GM12878 (cell line): ENCODE measurements at regions of chr14 and their contacts with region 1.

Region 1: DNA sequence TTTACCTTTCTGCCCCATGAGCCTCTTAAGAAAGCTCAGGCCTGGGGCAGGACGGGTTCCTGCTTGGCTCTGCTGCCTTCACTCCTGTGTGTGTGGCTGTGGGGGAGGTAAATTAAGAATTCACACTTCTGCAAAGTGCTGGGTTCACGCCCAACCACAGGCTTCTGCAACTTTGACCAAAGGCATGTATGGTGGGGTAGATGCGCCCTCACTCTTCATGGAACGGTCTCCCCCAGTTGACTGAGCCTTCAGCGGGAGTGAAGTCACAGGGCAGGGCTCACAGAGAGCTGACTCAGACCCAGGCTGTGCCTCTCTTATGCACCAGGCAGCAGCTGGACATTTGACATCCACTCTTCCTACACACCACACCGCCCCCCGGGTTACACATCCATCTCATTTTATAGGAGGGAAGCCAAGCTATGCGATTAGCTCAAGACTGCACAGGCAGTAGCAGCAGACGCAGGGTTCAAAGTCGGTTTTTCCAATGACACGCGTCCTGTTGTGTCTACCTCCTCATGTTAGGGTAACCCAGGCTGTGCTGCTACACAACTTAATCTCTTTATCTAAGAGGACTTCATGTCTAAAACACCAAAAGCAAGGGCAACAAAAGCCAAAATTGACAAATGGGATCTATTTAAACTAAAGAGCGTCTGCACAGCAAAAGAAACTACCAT is 15.4 kb upstream of the BCL11B start:
- DNase-seq: peak; percentile 55
- ATAC-seq: peak; percentile 94
- H3K4me3 ChIP-seq: peak overlapping the region; percentile 55
- H3K27ac ChIP-seq: peak overlapping the region; percentile 78
- H3K4me1 ChIP-seq: peaks cover 31% of the 10 kb centered on the region
- H3K27me3 ChIP-seq: no peaks in the 10 kb centered on the region
- CTCF ChIP-seq: no peak
- EP300 ChIP-seq: no peak
- POLR2A ChIP-seq: no peak
- RAD21 ChIP-seq: no peak

Region 2: DNA sequence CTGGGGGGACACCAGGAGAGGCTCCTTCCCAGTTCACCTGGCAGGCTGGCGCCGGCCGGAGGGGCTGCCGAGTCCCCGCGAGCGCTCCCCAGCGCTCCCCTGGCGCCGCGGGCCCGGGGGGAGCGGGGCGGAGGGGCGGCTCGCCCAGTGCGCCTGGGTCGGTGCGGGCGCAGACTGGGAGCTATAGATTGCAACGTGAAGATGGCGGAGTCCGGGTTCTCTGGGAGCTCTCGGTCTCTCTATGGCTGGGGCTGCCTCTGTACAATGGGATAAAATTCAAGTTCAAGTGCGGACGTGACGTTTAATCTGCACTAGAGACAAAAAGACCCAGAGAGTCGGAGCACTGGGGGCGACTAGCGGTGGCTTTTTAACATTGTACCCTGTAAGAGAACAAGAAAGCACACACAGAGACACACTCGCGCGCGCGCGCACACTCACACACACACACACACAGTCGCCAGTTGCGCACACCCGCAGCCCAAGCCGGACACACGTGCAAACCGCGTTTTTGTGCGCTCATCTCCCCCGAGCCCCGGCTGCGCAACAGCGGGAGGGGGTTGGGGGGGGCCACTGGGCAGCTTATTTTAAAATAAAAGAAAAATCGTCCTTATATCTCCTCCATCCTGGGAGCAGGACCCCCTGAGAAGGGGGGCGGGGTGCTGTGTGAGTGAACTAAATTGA is 15.3 kb before region 1 on chr14 and contains the start of gene BCL11B:
- CTCF ChIA-PET with region 1: interaction called, 22 read pairs
- POLR2A ChIA-PET with region 1: interaction called, 3 read pairs
- RAD21 ChIA-PET with region 1: interaction called, 17 read pairs
- SMC1A ChIA-PET with region 1: interaction called, 26 read pairs
- in situ Hi-C with region 1: no loop called
- intact Hi-C with region 1: no loop called
- DNase-seq: peak; percentile 24
- ATAC-seq: peak; percentile 79
- H3K4me3 ChIP-seq: peak within 1 kb of the TSS; percentile 80
- H3K27ac ChIP-seq: no peak within 1 kb of the TSS
- H3K4me1 ChIP-seq: peaks cover 12% of the 10 kb centered on the region
- H3K27me3 ChIP-seq: peaks cover 10 to 32% of the 10 kb centered on the region in 2 experiments
- CTCF ChIP-seq: peak; percentile 43 to 53 (median 46); a peak in 5 of 6 replicates
- EP300 ChIP-seq: no peak
- POLR2A ChIP-seq: peak; percentile 62; the same call in 1 of the 2 replicates
- RAD21 ChIP-seq: peak; percentile 56
- polyA plus RNA-seq, gene BCL11B: 0.38 to 1.7 TPM

Region 3: GRCh38 chr14:99460793-99461192 is 173.4 kb after region 1 on chr14:
- CTCF ChIA-PET with region 1: no interaction called
- POLR2A ChIA-PET with region 1: no interaction called
- RAD21 ChIA-PET with region 1: no interaction called
- SMC1A ChIA-PET with region 1: no interaction called
- in situ Hi-C with region 1: no loop called
- intact Hi-C with region 1: no loop called
- DNase-seq: no peak
- ATAC-seq: no peak
- H3K4me3 ChIP-seq: no peak overlapping the region
- H3K27ac ChIP-seq: no peak overlapping the region
- H3K4me1 ChIP-seq: no peaks in the 10 kb centered on the region
- H3K27me3 ChIP-seq: no peaks in the 10 kb centered on the region
- CTCF ChIP-seq: no peak
- EP300 ChIP-seq: no peak
- POLR2A ChIP-seq: no peak
- RAD21 ChIP-seq: no peak